Posterior vena cava (tissue), 2 donors: ENCODE measurements at regions of chr20 and their contacts with region 1.

Region 1: DNA sequence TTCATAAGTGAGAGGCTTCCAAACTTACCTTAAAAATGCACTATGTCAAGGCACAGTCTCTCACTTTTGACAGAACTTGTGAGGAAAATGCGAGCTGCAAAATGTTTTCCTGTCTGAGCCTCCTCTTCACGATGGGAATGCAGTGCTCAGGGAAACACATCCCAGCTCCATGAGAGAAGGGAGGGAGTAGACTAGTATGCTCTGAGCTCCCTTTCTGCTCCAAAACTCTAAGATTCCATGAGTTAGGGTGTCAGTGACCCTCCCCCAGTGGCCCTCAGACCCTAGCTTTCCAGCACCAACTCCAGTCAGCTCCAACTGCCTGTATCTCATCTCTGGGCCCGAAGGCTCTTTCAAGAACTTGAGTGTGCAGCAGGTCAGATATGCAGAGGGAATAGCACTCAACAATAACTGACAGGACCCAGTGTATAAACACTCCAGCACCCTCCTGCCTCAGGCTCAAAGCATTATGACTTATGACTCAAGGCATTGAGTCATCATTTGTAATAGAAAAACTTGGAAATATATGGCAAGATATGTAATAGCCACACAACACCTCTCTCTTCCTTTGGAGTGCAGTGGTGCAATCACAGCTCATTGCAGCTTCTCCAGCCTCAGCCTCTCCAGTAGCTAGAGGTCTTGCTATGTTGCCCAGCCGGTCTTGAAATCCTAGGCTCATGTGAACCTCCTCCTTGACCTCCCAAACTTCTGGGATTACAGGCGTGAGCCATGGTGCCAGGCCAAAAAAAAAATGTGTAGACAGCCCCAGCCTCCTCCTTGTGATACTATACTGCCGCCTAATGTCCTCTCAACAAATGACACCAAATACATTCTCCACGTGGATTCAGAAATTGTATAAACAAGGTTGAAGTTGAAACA is 16.7 kb upstream of the ENTPD6 start:
- DNase-seq: no peak

Region 2: GRCh38 chr20:24992487-24993205 is 186.2 kb before region 1 on chr20 and contains the start of gene APMAP:
- intact Hi-C with region 1: loop called (anchors 5 kb)
- DNase-seq: peak; percentile 99
- total RNA-seq, gene APMAP: 32.7 to 45.6 TPM

Region 3: GRCh38 chr20:25076731-25077609 is 101.8 kb before region 1 on chr20:
- intact Hi-C with region 1: loop called in 1 of 2 experiments (anchors 5 kb)
- DNase-seq: peak; percentile 56